ENCODE measurements at regions of chr3 and their contacts with region 1.

Region 1: DNA sequence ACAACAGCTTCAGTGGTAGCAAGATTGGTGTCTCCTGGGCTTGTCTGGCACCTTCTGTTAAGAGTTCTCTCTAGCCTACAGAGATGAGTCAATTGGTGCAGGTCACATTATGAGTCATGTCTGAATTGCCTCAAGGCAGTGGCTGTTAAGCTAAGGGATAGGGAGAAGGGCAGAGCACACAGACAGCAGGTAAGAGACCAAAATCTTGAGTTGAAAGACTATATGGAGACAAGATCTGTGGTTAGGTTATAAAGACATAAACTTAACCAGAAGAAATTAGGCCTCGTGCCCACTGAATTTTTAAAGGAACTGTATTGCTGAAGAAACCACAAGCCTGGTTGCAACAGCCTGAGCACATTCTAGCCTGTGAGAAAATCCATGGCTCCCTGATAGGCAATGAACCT is 19.2 kb upstream of the KPNA1 start:
- DNase-seq: peak in 1 of 2 donors; percentile 48
- H3K4me3 ChIP-seq: no peak overlapping the region
- H3K27ac ChIP-seq: peak overlapping the region; percentile 3 to 21
- H3K4me1 ChIP-seq: peaks cover 0 to 4% of the 10 kb centered on the region in 2 donors
- H3K27me3 ChIP-seq: no peaks in the 10 kb centered on the region
- CTCF ChIP-seq: no peak
- POLR2A ChIP-seq: no peak

Region 2: GRCh38 chr3:121660356-121661171 is 873.4 kb before region 1 on chr3 and contains the start of gene HCLS1:
- intact Hi-C with region 1: loop called (anchors 10 kb)
- DNase-seq: no peak
- H3K4me3 ChIP-seq: peak within 1 kb of the TSS; percentile 20 to 52 (median 32)
- H3K27ac ChIP-seq: peak within 1 kb of the TSS; percentile 6 to 73
- H3K4me1 ChIP-seq: no peaks in the 10 kb centered on the region
- H3K27me3 ChIP-seq: no peaks in the 10 kb centered on the region
- CTCF ChIP-seq: no peak
- POLR2A ChIP-seq: no peak
- total RNA-seq, gene HCLS1: 37.8 to 144 (median 42.6) TPM

Region 3: GRCh38 chr3:122475316-122475715 is 58.6 kb before region 1 on chr3:
- intact Hi-C with region 1: no loop called
- DNase-seq: no peak
- H3K4me3 ChIP-seq: no peak overlapping the region
- H3K27ac ChIP-seq: no peak overlapping the region
- H3K4me1 ChIP-seq: no peaks in the 10 kb centered on the region
- H3K27me3 ChIP-seq: no peaks in the 10 kb centered on the region
- CTCF ChIP-seq: no peak
- POLR2A ChIP-seq: no peak

Region 4: GRCh38 chr3:122548076-122548475 is 14.1 kb after region 1 on chr3:
- intact Hi-C with region 1: no loop called
- DNase-seq: no peak
- H3K4me3 ChIP-seq: no peak overlapping the region
- H3K27ac ChIP-seq: no peak overlapping the region
- H3K4me1 ChIP-seq: no peaks in the 10 kb centered on the region
- H3K27me3 ChIP-seq: no peaks in the 10 kb centered on the region
- CTCF ChIP-seq: no peak
- POLR2A ChIP-seq: no peak

Region 5: DNA sequence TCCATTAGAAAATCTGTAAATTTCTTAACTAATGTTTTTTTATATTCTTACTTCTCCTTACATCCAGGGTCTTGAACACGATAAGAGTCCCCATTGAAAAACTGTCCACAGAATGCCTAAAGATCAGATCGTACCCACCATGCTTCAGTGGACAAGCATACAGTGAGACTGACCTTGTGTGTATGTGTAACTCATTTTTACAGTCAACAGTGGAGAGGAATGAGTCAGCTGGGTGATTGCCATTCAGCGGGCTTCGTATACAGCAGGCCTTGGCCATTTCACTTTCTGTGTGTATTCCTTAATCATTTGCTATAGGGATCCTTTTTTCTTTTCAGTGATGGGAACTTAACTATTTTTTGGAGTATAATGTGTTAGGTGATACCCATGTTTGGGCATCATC is 157.3 kb after region 1 on chr3:
- intact Hi-C with region 1: no loop called
- DNase-seq: no peak
- H3K4me3 ChIP-seq: no peak overlapping the region
- H3K27ac ChIP-seq: no peak overlapping the region
- H3K4me1 ChIP-seq: no peaks in the 10 kb centered on the region
- H3K27me3 ChIP-seq: no peaks in the 10 kb centered on the region
- CTCF ChIP-seq: no peak
- POLR2A ChIP-seq: no peak